ENCODE measurements at regions of chr2 and their contacts with region 1.

Region 1: GRCh38 chr2:160406591-160407392 is 86.8 kb downstream of the RBMS1 start:
- DNase-seq: peak; percentile 60 to 92 (median 82)
- ATAC-seq: peak; percentile 67 to 85
- H3K4me3 Mint-ChIP-seq: peak overlapping the region; percentile 86 to 99 (median 90)
- H3K27ac Mint-ChIP-seq: peak overlapping the region; percentile 89 to 98 (median 93)
- H3K4me1 Mint-ChIP-seq: peaks cover 42 to 91% (median 79%) of the 10 kb centered on the region in 4 donors
- H3K27me3 Mint-ChIP-seq: no peaks in the 10 kb centered on the region

Region 2: GRCh38 chr2:160282063-160282580 is 124.7 kb before region 1 on chr2:
- POLR2A ChIA-PET with region 1: no interaction called
- DNase-seq: no peak
- ATAC-seq: no peak
- H3K4me3 Mint-ChIP-seq: no peak overlapping the region
- H3K27ac Mint-ChIP-seq: peak overlapping the region in 6 of 10 donors; percentile 1 to 70 (median 45)
- H3K4me1 Mint-ChIP-seq: peaks cover 6 to 18% (median 12%) of the 10 kb centered on the region in 4 donors
- H3K27me3 Mint-ChIP-seq: no peaks in the 10 kb centered on the region

Region 3: DNA sequence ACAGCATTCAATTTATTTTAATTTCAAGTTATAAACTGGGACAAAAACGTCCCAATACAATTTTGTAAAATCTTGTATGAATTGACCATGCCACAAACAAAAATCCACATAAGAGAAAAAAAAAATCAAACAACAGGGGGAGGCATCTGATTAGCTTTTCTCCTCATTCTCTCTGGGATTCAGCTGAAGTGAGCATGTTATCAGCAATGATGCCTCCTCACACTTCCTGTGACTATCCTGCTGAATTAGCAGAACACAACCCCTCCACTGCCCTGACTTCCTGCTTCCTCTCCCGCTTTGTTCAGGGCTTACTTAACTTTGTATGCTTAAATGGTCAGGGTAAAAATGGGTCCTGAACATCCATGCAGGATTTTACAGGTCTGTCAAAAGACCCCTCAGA is 74.5 kb before region 1 on chr2:
- POLR2A ChIA-PET with region 1: no interaction called
- DNase-seq: peak in 2 of 10 donors; percentile 17 to 19
- ATAC-seq: peak; percentile 60 to 61
- H3K4me3 Mint-ChIP-seq: peak overlapping the region in 8 of 10 donors; percentile 5 to 75 (median 50)
- H3K27ac Mint-ChIP-seq: peak overlapping the region in 7 of 10 donors; percentile 24 to 86 (median 70)
- H3K4me1 Mint-ChIP-seq: peaks cover 55 to 94% (median 90%) of the 10 kb centered on the region in 4 donors
- H3K27me3 Mint-ChIP-seq: no peaks in the 10 kb centered on the region

Region 4: GRCh38 chr2:160375802-160376469 is 30.9 kb before region 1 on chr2:
- POLR2A ChIA-PET with region 1: interaction called, 11 read pairs
- DNase-seq: peak in 1 of 10 donors; percentile 22
- ATAC-seq: peak in 1 of 2 donors; percentile 76
- H3K4me3 Mint-ChIP-seq: peak overlapping the region in 9 of 10 donors; percentile 1 to 69 (median 39)
- H3K27ac Mint-ChIP-seq: peak overlapping the region in 4 of 10 donors; percentile 31 to 76 (median 62)
- H3K4me1 Mint-ChIP-seq: peaks cover 41 to 96% (median 91%) of the 10 kb centered on the region in 4 donors
- H3K27me3 Mint-ChIP-seq: no peaks in the 10 kb centered on the region

Region 5: GRCh38 chr2:160429248-160430000 is 22.6 kb after region 1 on chr2:
- POLR2A ChIA-PET with region 1: interaction called, 59 read pairs
- DNase-seq: peak in 3 of 10 donors; percentile 61 to 64 (median 64)
- ATAC-seq: peak; percentile 33 to 42
- H3K4me3 Mint-ChIP-seq: peak overlapping the region in 6 of 10 donors; percentile 23 to 62 (median 37)
- H3K27ac Mint-ChIP-seq: peak overlapping the region; percentile 80 to 97 (median 88)
- H3K4me1 Mint-ChIP-seq: peaks cover 28 to 76% (median 63%) of the 10 kb centered on the region in 4 donors
- H3K27me3 Mint-ChIP-seq: no peaks in the 10 kb centered on the region

Region 6: DNA sequence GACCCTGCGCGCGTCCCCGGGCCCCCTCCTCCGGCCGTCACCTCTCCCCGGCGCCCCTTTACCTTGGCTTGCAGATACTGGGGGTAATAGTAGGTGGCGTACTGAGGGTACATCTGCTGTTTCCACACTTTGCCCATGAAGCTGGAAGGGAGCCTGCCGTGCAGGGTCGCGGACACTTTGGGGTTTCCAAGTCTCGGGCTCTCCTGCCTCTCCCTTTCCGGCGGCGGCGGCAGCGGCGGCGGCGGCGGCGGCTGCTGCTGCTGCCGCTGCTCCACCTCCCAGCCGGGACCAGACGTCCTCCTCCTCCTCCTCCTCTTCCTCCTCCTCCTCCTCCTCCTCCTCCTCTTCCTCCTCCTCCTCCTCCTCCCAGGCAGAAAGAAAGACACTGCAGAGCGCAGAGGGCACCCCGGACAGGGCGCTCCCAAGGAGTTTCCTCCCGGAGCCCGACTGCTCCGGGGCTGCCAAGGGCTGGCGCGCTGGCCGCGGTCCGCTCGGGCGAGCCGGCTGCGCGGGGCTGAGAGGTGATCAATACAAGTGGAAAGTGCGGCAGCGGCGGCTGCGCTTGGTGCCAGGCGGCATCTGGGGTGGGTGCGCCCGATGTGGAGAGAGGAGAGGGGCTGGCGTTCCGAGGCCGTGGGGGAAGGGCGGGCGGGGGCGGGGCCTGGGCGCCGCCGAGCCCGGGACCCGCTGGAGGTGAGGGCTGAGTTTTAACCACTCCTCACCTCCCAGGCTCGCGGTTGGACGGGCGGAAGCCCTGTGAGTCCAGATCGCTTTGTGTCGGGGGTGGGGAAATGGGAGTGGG is 86.6 kb after region 1 on chr2 and contains the start of gene RBMS1:
- POLR2A ChIA-PET with region 1: interaction called, 13 read pairs
- DNase-seq: peak; percentile 17 to 75 (median 52)
- ATAC-seq: peak; percentile 56 to 64
- H3K4me3 Mint-ChIP-seq: peak within 1 kb of the TSS; percentile 87 to 98 (median 95)
- H3K27ac Mint-ChIP-seq: peak within 1 kb of the TSS; percentile 90 to 99 (median 95)
- H3K4me1 Mint-ChIP-seq: peaks cover 19 to 37% (median 35%) of the 10 kb centered on the region in 4 donors
- H3K27me3 Mint-ChIP-seq: peaks cover 0 to 8% (median 0%) of the 10 kb centered on the region in 5 donors
- polyA plus RNA-seq, gene RBMS1: 80.0 to 125 (median 110) TPM